B cell (primary cell): ENCODE measurements at regions of chr17 and their contacts with region 1.

Region 1: GRCh38 chr17:59641799-59642489 is 22.2 kb downstream of the CLTC start:
- DNase-seq: peak; percentile 80
- ATAC-seq: peak; percentile 88
- H3K4me3 ChIP-seq: peak overlapping the region in 3 of 5 experiments; percentile 8 to 43 (median 12)
- H3K4me3 Mint-ChIP-seq: peak overlapping the region; percentile 79
- H3K27ac ChIP-seq: peak overlapping the region; percentile 17 to 71
- H3K27ac Mint-ChIP-seq: peak overlapping the region; percentile 81
- H3K4me1 ChIP-seq: peaks cover 48 to 53% of the 10 kb centered on the region in 2 donors
- H3K4me1 Mint-ChIP-seq: peaks cover 68% of the 10 kb centered on the region
- H3K27me3 ChIP-seq: no peaks in the 10 kb centered on the region
- H3K27me3 Mint-ChIP-seq: no peaks in the 10 kb centered on the region
- CTCF ChIP-seq: no peak

Region 2: DNA sequence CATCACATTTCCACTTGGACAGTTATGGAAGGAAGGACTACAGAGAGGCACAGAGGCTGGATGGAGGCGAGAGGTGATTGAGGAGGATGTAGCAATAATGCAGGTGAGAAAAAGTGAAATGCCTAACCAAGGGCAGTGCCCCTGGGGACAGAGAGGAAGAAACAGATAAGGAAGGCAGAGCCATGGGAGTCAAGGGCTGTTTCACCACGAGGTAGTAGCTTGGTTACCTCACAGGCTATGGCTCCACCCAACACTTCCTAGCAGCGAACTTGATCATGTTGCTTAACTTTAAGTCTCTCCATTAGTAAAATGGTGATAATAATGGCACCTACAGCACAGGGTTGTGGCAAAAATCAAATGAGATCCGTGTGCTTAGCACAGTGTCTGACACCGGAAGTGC is 226.5 kb before region 1 on chr17:
- CTCF ChIA-PET with region 1: no interaction called
- POLR2A ChIA-PET with region 1: no interaction called
- intact Hi-C with region 1: no loop called
- DNase-seq: no peak
- ATAC-seq: no peak
- H3K4me3 ChIP-seq: no peak overlapping the region
- H3K4me3 Mint-ChIP-seq: no peak overlapping the region
- H3K27ac ChIP-seq: no peak overlapping the region
- H3K27ac Mint-ChIP-seq: no peak overlapping the region
- H3K4me1 ChIP-seq: peaks cover 8% of the 10 kb centered on the region in 2 donors
- H3K4me1 Mint-ChIP-seq: peaks cover 12% of the 10 kb centered on the region
- H3K27me3 ChIP-seq: no peaks in the 10 kb centered on the region
- H3K27me3 Mint-ChIP-seq: peaks cover 3% of the 10 kb centered on the region
- CTCF ChIP-seq: no peak

Region 3: GRCh38 chr17:59547131-59547915 is 94.6 kb before region 1 on chr17:
- CTCF ChIA-PET with region 1: no interaction called
- POLR2A ChIA-PET with region 1: no interaction called
- intact Hi-C with region 1: no loop called
- DNase-seq: no peak
- ATAC-seq: no peak
- H3K4me3 ChIP-seq: no peak overlapping the region
- H3K4me3 Mint-ChIP-seq: no peak overlapping the region
- H3K27ac ChIP-seq: no peak overlapping the region
- H3K27ac Mint-ChIP-seq: no peak overlapping the region
- H3K4me1 ChIP-seq: no peaks in the 10 kb centered on the region
- H3K4me1 Mint-ChIP-seq: no peaks in the 10 kb centered on the region
- H3K27me3 ChIP-seq: no peaks in the 10 kb centered on the region
- H3K27me3 Mint-ChIP-seq: no peaks in the 10 kb centered on the region
- CTCF ChIP-seq: no peak

Region 4: DNA sequence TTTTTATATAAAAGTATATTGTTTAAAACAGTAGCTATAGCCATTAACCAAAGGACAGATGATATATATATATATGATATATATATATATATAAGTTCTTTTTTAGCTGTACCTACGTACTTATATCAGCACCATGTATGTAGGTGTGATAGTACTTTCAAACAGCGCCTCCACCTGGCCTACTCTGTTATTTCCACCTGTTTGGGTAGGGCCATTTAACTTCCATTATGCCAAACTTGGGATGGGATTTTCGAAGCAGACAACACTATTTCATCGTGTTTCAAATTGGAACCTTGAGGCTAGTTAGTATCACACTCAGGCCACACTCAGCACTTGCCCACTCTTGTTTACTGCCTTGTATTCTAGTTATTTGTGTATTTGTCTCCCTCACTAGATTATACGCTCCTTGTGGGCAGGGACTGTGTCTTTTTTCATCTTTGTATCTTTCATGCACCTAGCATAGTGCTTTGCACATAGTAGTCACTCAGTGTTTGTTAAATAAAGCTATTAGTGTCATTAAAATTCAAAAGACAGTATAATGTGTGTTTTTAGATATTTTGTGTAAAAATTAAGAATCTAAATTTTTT is 34.0 kb before region 1 on chr17:
- CTCF ChIA-PET with region 1: no interaction called
- POLR2A ChIA-PET with region 1: no interaction called
- intact Hi-C with region 1: loop called (anchors 5 kb)
- DNase-seq: no peak
- ATAC-seq: no peak
- H3K4me3 ChIP-seq: no peak overlapping the region
- H3K4me3 Mint-ChIP-seq: no peak overlapping the region
- H3K27ac ChIP-seq: no peak overlapping the region
- H3K27ac Mint-ChIP-seq: no peak overlapping the region
- H3K4me1 ChIP-seq: no peaks in the 10 kb centered on the region
- H3K4me1 Mint-ChIP-seq: no peaks in the 10 kb centered on the region
- H3K27me3 ChIP-seq: no peaks in the 10 kb centered on the region
- H3K27me3 Mint-ChIP-seq: no peaks in the 10 kb centered on the region
- CTCF ChIP-seq: peak; percentile 45

Region 5: GRCh38 chr17:59627770-59628171 is 14.2 kb before region 1 on chr17:
- CTCF ChIA-PET with region 1: interaction called, 3 read pairs
- POLR2A ChIA-PET with region 1: interaction called, 6 read pairs
- intact Hi-C with region 1: loop called (anchors 2 kb)
- DNase-seq: peak; percentile 47
- ATAC-seq: peak; percentile 45
- H3K4me3 ChIP-seq: no peak overlapping the region
- H3K4me3 Mint-ChIP-seq: peak overlapping the region; percentile 61
- H3K27ac ChIP-seq: peak overlapping the region; percentile 8 to 64
- H3K27ac Mint-ChIP-seq: peak overlapping the region; percentile 21
- H3K4me1 ChIP-seq: peaks cover 55 to 74% of the 10 kb centered on the region in 2 donors
- H3K4me1 Mint-ChIP-seq: peaks cover 69% of the 10 kb centered on the region
- H3K27me3 ChIP-seq: no peaks in the 10 kb centered on the region
- H3K27me3 Mint-ChIP-seq: no peaks in the 10 kb centered on the region
- CTCF ChIP-seq: no peak